ENCODE measurements at regions of chr19 and their contacts with region 1.

Region 1: DNA sequence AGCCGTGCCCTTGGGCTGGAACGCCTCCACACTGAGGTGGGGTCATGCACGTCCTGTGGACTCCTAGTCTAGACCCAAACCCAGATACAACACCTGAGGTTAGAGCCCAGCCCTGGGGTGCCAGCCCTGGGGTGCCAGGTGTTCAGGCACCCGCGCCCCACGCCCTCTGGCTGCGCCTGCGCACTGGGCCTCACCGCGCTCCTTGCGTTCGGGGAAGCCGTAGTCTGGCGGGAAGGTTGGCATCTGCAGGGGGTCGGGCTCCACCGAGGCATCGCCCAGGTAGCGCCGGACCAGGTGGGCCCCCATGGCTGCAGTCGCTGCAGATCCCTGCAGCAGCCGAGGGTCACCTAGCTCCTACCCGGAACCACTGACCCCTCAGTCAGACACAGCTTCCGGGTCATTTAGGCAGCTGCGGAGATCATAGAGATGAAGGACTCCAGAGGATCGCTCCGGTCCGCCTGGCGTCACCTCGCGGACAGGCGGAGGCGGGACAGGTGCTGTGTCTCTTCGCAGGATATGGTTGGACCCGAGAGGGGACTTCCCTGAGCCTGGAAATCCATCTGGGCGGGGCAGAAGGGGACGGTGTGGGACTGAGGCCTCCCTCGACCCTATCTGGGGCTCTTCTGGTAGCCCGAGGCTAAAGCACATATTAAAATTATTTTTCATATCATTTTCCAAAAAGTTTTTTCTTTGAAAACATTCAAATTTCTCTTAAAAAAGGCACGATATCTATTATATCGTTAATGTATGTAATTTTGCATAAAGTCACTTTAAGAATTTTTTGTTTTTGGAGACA is at the start of gene NDUFB7:
- DNase-seq: peak; percentile 95
- H3K4me3 Mint-ChIP-seq: peak within 1 kb of the TSS; percentile 95
- H3K27ac Mint-ChIP-seq: peak within 1 kb of the TSS; percentile 79
- H3K4me1 Mint-ChIP-seq: peaks cover 38% of the 10 kb centered on the region
- H3K27me3 Mint-ChIP-seq: no peaks in the 10 kb centered on the region
- total RNA-seq, gene NDUFB7: 117 to 123 TPM

Region 2: DNA sequence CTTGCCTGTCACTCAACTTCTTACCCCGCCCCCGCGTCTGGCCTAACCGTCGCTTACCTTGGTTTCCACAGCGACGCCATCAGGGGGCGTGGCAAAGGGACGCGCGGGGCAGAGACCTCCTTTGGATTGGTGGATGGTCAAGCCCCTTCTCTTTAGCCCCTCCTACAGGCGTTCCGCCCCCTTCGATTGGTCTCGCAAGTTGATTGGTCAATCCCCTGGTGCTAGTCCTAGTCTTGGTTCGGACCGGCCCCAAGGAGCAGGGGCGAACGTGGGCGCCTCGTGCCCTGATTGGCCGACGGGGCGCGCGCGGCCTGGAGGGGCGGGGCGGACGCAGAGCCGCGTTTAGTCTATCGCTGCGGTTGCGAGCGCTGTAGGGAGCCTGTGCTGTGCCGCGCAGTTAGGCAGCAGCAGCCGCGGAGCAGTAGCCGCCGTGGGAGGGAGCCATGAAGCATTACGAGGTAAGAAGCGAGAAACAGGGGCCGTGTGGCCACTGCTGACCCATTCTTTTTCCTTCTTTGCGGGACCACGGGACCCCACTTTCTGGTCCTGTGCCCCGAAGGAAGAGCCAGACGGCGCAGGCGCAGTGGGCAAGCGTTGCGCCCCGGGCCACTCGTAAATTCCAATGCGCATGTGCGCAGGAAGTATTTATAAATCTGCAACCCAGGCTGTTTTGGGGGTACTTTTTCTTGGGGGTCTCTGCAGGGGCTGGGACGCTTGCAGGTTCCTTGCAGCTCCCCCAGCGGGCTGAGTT is 42.5 kb before region 1 on chr19 and contains the start of gene TECR:
- CTCF ChIA-PET with region 1: no interaction called
- intact Hi-C with region 1: loop called (anchors 1 kb)
- DNase-seq: peak; percentile 100
- H3K4me3 Mint-ChIP-seq: peak within 1 kb of the TSS; percentile 99
- H3K27ac Mint-ChIP-seq: peak within 1 kb of the TSS; percentile 94
- H3K4me1 Mint-ChIP-seq: peaks cover 43% of the 10 kb centered on the region
- H3K27me3 Mint-ChIP-seq: no peaks in the 10 kb centered on the region
- total RNA-seq, gene TECR: 102 to 105 TPM

Region 3: GRCh38 chr19:14689598-14690503 is 118.0 kb after region 1 on chr19 and contains the start of gene ZNF333:
- CTCF ChIA-PET with region 1: interaction called, 282 read pairs
- intact Hi-C with region 1: loop called (anchors 1 kb)
- DNase-seq: peak; percentile 100
- H3K4me3 Mint-ChIP-seq: peak within 1 kb of the TSS; percentile 96
- H3K27ac Mint-ChIP-seq: peak within 1 kb of the TSS; percentile 99
- H3K4me1 Mint-ChIP-seq: peaks cover 18% of the 10 kb centered on the region
- H3K27me3 Mint-ChIP-seq: no peaks in the 10 kb centered on the region
- total RNA-seq, gene ZNF333: 28.6 to 31.7 TPM

Region 4: DNA sequence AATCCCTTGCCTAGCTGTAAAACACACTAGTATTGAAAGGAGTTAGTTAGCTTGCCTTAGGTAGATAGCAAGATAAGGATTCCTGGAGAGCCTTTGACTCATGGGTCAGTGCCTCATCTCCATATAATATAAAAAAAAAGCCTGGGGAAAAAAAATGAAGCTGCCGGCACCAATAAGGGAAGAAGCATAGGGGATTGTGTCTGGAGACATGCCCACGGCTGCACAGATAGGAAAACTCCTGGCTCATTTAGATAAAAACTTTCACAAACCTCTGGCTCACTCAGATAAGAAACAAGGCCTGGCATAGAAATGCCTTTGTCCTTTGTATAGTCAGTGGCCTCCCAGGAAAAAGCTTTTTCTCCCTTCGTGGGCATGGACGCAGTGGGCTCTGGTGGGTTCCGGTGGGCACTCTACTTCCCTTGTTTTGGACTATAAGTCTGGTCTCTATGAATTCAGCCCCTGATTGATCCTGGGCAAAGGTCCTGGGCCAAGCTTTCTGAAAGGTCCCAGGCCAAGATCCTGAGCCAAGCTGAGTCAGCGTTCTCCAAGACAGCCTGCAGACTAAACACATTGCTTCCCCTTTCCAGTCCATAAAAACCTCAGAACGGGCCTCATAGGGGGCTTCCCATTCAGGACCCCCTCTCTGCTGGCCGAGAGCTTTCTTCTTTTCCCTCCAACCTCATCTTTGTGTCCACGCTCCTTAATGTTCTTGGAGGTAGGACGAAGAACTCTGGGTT is 318.9 kb after region 1 on chr19:
- CTCF ChIA-PET with region 1: no interaction called
- intact Hi-C with region 1: loop called (anchors 1 kb)
- DNase-seq: no peak
- H3K4me3 Mint-ChIP-seq: no peak overlapping the region
- H3K27ac Mint-ChIP-seq: no peak overlapping the region
- H3K4me1 Mint-ChIP-seq: peaks cover 8% of the 10 kb centered on the region
- H3K27me3 Mint-ChIP-seq: peaks cover 31% of the 10 kb centered on the region

Measured in activated naive CD4-positive, alpha-beta T cell treated with anti-CD3 and anti-CD28 coated beads for 36 hours (primary cell).